Dorsolateral prefrontal cortex (tissue), 120 donors: ENCODE measurements at regions of chr19 and their contacts with region 1.

Region 1: DNA sequence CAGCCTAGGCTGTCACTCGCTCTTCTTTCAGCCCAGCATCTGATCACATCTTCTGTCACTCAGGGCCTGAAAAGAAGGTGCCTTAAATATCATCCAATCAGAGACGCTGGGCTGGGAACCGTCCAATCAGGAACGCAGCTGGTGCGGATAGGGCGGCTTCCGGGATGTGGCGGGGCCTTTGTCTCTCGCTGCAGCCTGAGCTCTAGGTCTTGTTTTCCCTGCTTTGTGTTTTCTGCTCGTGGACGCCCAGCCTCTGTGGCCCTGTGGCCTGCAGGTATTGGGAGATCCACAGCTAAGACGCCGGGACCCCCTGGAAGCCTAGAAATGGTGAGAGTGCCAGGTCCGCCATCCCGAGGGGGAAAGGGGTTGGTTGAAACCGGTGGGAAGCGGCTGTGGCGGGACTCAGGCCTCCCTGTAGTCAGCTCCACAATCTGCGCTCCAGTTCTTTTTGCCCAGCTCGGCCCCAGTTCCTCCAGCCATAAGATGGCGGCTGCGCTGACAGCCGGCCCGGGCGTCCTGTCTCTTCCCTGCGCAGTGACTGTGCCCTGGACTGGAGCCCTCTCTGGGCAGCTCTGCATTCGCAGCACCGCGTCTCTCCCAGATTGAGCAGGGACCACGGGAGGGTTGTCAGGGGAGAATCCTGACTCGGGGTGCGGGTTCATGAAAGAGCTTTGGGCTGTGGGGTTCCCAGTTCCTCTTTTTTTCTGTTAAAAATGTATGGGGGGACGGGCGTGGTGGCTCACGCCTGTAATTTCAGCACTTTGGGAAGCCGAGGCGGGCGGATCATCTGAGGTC is at the start of gene ZNF85:
- DNase-seq: peak; percentile 83 to 96 (median 94)
- H3K4me3 ChIP-seq: peak within 1 kb of the TSS; percentile 48 to 93 (median 77)
- H3K27ac ChIP-seq: peak within 1 kb of the TSS in 57 of 59 donors; percentile 15 to 94 (median 79)
- H3K27me3 ChIP-seq: no peaks in the 10 kb centered on the region
- CTCF ChIP-seq: no peak
- total RNA-seq, gene ZNF85: 3.1 to 12.1 (median 7.1) TPM

Region 2: GRCh38 chr19:21020298-21021227 is 97.3 kb after region 1 on chr19 and contains the start of gene ZNF430:
- intact Hi-C with region 1: loop called in 1 of 2 experiments (anchors 5 kb)
- DNase-seq: peak; percentile 89 to 98 (median 96)
- H3K4me3 ChIP-seq: peak within 1 kb of the TSS; percentile 43 to 99 (median 86)
- H3K27ac ChIP-seq: peak within 1 kb of the TSS in 55 of 59 donors; percentile 4 to 90 (median 83)
- H3K27me3 ChIP-seq: no peaks in the 10 kb centered on the region
- CTCF ChIP-seq: peak in 2 of 56 donors; percentile 4 to 16
- total RNA-seq, gene ZNF430: 11.2 to 32.5 (median 22.0) TPM

Region 3: DNA sequence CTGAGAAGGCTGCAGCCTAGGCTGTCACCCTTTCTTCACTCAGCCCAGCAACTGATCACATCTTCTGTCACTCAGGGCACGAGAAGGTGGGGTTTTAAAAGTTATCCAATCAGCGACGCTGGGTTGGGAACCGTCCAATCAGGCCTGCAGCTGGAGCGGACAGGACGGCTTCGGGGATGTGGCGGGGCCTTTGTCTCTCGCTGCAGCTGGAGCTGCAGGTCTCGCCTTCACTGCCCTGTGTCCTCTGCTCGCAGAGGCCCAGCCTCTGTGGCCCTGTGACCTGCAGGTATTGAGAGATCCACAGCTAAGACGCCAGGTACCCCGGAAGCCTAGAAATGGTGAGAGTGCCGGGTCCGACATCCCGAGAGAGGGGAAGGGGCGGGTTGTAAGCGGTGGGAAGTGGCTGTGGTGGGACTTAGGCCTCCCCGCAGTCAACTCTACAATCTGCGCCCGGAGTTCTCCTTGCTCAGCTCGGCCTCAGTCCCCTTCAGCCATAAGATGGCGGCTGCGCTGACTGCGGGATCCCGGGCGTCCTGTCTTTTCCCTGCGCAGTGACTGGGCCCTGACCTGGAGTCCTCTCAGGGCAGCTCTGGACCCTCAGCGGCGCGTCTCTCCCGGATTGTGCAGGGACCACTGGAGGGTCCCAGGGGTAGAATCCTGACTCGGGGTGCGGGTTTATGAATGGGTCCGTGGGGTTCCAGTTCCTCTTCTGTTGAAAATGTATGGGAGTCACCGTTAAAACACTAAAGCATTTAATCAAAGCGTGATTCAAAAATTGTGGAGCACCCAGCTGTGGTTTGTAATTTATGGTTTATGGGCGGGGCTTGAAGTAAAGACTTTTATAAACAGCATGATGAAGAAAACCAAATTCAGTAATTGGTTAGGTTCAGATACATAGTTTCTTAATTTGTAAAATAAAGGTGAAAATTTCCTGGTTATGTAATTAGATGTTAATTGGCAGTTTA is 159.0 kb after region 1 on chr19 and contains the start of gene ZNF714:
- intact Hi-C with region 1: no loop called
- DNase-seq: peak; percentile 58 to 96 (median 88)
- H3K4me3 ChIP-seq: peak within 1 kb of the TSS; percentile 39 to 89 (median 66)
- H3K27ac ChIP-seq: peak within 1 kb of the TSS in 23 of 59 donors; percentile 3 to 78 (median 65)
- H3K27me3 ChIP-seq: no peaks in the 10 kb centered on the region
- CTCF ChIP-seq: peak in 3 of 56 donors; percentile 3 to 20 (median 10)
- total RNA-seq, gene ZNF714: 8.1 to 28.9 (median 17.5) TPM